Endothelial cell of umbilical vein (primary cell): ENCODE measurements at regions of chr1 and their contacts with region 1.

Region 1: GRCh38 chr1:191125950-191126349 is 648.3 kb upstream of the BRINP3 start:
- DNase-seq: no peak
- H3K4me3 ChIP-seq: no peak overlapping the region
- H3K27ac ChIP-seq: no peak overlapping the region
- H3K4me1 ChIP-seq: no peaks in the 10 kb centered on the region
- H3K27me3 ChIP-seq: no peaks in the 10 kb centered on the region
- CTCF ChIP-seq: no peak
- POLR2A ChIP-seq: no peak

Region 2: GRCh38 chr1:190633488-190633887 is 492.5 kb before region 1 on chr1:
- CTCF ChIA-PET with region 1: no interaction called
- POLR2A ChIA-PET with region 1: no interaction called
- dilution Hi-C with region 1: no loop called
- intact Hi-C with region 1: loop called (anchors 2 kb)
- DNase-seq: no peak
- H3K4me3 ChIP-seq: no peak overlapping the region
- H3K27ac ChIP-seq: no peak overlapping the region
- H3K4me1 ChIP-seq: no peaks in the 10 kb centered on the region
- H3K27me3 ChIP-seq: no peaks in the 10 kb centered on the region
- CTCF ChIP-seq: no peak
- POLR2A ChIP-seq: no peak

Region 3: GRCh38 chr1:190754666-190755065 is 371.3 kb before region 1 on chr1:
- CTCF ChIA-PET with region 1: interaction called, 4 read pairs
- POLR2A ChIA-PET with region 1: no interaction called
- dilution Hi-C with region 1: no loop called
- intact Hi-C with region 1: loop called (anchors 2 kb)
- DNase-seq: peak; percentile 61
- H3K4me3 ChIP-seq: no peak overlapping the region
- H3K27ac ChIP-seq: no peak overlapping the region
- H3K4me1 ChIP-seq: no peaks in the 10 kb centered on the region
- H3K27me3 ChIP-seq: no peaks in the 10 kb centered on the region
- CTCF ChIP-seq: no peak
- POLR2A ChIP-seq: no peak

Region 4: GRCh38 chr1:191508239-191508638 is 382.3 kb after region 1 on chr1:
- CTCF ChIA-PET with region 1: no interaction called
- POLR2A ChIA-PET with region 1: no interaction called
- dilution Hi-C with region 1: no loop called
- intact Hi-C with region 1: no loop called
- DNase-seq: no peak
- H3K4me3 ChIP-seq: no peak overlapping the region
- H3K27ac ChIP-seq: no peak overlapping the region
- H3K4me1 ChIP-seq: no peaks in the 10 kb centered on the region
- H3K27me3 ChIP-seq: no peaks in the 10 kb centered on the region
- CTCF ChIP-seq: no peak
- POLR2A ChIP-seq: no peak

Region 5: GRCh38 chr1:192363177-192363576 is 1237.2 kb after region 1 on chr1:
- CTCF ChIA-PET with region 1: no interaction called
- POLR2A ChIA-PET with region 1: no interaction called
- dilution Hi-C with region 1: no loop called
- intact Hi-C with region 1: no loop called
- DNase-seq: no peak
- H3K4me3 ChIP-seq: no peak overlapping the region
- H3K27ac ChIP-seq: no peak overlapping the region
- H3K4me1 ChIP-seq: no peaks in the 10 kb centered on the region
- H3K27me3 ChIP-seq: no peaks in the 10 kb centered on the region
- CTCF ChIP-seq: no peak
- POLR2A ChIP-seq: no peak